Naive thymus-derived CD4-positive, alpha-beta T cell (primary cell): ENCODE measurements at regions of chr3 and their contacts with region 1.

Region 1: GRCh38 chr3:188320757-188321156 is 166.8 kb downstream of the LPP start:
- DNase-seq: no peak
- ATAC-seq: no peak
- H3K4me3 ChIP-seq: no peak overlapping the region
- H3K4me3 Mint-ChIP-seq: peak overlapping the region in 1 of 10 donors; percentile 37
- H3K27ac ChIP-seq: no peak overlapping the region
- H3K27ac Mint-ChIP-seq: peak overlapping the region in 2 of 9 donors; percentile 11 to 59
- H3K4me1 ChIP-seq: peaks cover 19 to 26% of the 10 kb centered on the region in 2 donors
- H3K4me1 Mint-ChIP-seq: peaks cover 34 to 67% (median 55%) of the 10 kb centered on the region in 7 donors
- H3K27me3 ChIP-seq: no peaks in the 10 kb centered on the region
- H3K27me3 Mint-ChIP-seq: peaks cover 0 to 6% (median 0%) of the 10 kb centered on the region in 5 donors

Region 2: GRCh38 chr3:188309437-188310269 is 11.1 kb before region 1 on chr3:
- CTCF ChIA-PET with region 1: no interaction called
- POLR2A ChIA-PET with region 1: no interaction called
- intact Hi-C with region 1: loop called in 1 of 2 experiments (anchors 1 kb)
- DNase-seq: peak in 1 of 9 donors; percentile 42
- ATAC-seq: no peak
- H3K4me3 ChIP-seq: no peak overlapping the region
- H3K4me3 Mint-ChIP-seq: peak overlapping the region in 2 of 10 donors; percentile 3 to 75
- H3K27ac ChIP-seq: no peak overlapping the region
- H3K27ac Mint-ChIP-seq: peak overlapping the region in 4 of 9 donors; percentile 10 to 77 (median 44)
- H3K4me1 ChIP-seq: no peaks in the 10 kb centered on the region
- H3K4me1 Mint-ChIP-seq: peaks cover 9 to 25% (median 14%) of the 10 kb centered on the region in 7 donors
- H3K27me3 ChIP-seq: no peaks in the 10 kb centered on the region
- H3K27me3 Mint-ChIP-seq: peaks cover 0 to 10% (median 0%) of the 10 kb centered on the region in 5 donors

Region 3: GRCh38 chr3:188339410-188340295 is 18.9 kb after region 1 on chr3:
- CTCF ChIA-PET with region 1: interaction called, 3 read pairs
- POLR2A ChIA-PET with region 1: no interaction called
- intact Hi-C with region 1: loop called in 1 of 2 experiments (anchors 1 kb)
- DNase-seq: peak in 1 of 9 donors; percentile 41
- ATAC-seq: peak; percentile 89
- H3K4me3 ChIP-seq: peak overlapping the region; percentile 5
- H3K4me3 Mint-ChIP-seq: peak overlapping the region in 4 of 10 donors; percentile 2 to 71 (median 4)
- H3K27ac ChIP-seq: no peak overlapping the region
- H3K27ac Mint-ChIP-seq: peak overlapping the region in 3 of 9 donors; percentile 6 to 80 (median 80)
- H3K4me1 ChIP-seq: peaks cover 0 to 17% of the 10 kb centered on the region in 2 donors
- H3K4me1 Mint-ChIP-seq: peaks cover 12 to 33% (median 19%) of the 10 kb centered on the region in 7 donors
- H3K27me3 ChIP-seq: no peaks in the 10 kb centered on the region
- H3K27me3 Mint-ChIP-seq: peaks cover 0 to 12% (median 0%) of the 10 kb centered on the region in 5 donors

Region 4: GRCh38 chr3:188358787-188359493 is 38.2 kb after region 1 on chr3:
- CTCF ChIA-PET with region 1: no interaction called
- POLR2A ChIA-PET with region 1: no interaction called
- intact Hi-C with region 1: loop called in 1 of 2 experiments (anchors 2 kb)
- DNase-seq: peak in 7 of 9 donors; percentile 11 to 56 (median 44)
- ATAC-seq: peak; percentile 85
- H3K4me3 ChIP-seq: peak overlapping the region; percentile 8
- H3K4me3 Mint-ChIP-seq: peak overlapping the region; percentile 53 to 82 (median 69)
- H3K27ac ChIP-seq: peak overlapping the region; percentile 45
- H3K27ac Mint-ChIP-seq: peak overlapping the region; percentile 31 to 95 (median 82)
- H3K4me1 ChIP-seq: peaks cover 31 to 32% of the 10 kb centered on the region in 2 donors
- H3K4me1 Mint-ChIP-seq: peaks cover 31 to 58% (median 47%) of the 10 kb centered on the region in 7 donors
- H3K27me3 ChIP-seq: no peaks in the 10 kb centered on the region
- H3K27me3 Mint-ChIP-seq: peaks cover 0 to 4% (median 0%) of the 10 kb centered on the region in 5 donors

Region 5: GRCh38 chr3:188400494-188401243 is 79.9 kb after region 1 on chr3:
- CTCF ChIA-PET with region 1: no interaction called
- POLR2A ChIA-PET with region 1: no interaction called
- intact Hi-C with region 1: loop called in 1 of 2 experiments (anchors 5 kb)
- DNase-seq: no peak
- ATAC-seq: peak; percentile 75
- H3K4me3 ChIP-seq: no peak overlapping the region
- H3K4me3 Mint-ChIP-seq: peak overlapping the region in 1 of 10 donors; percentile 42
- H3K27ac ChIP-seq: no peak overlapping the region
- H3K27ac Mint-ChIP-seq: peak overlapping the region in 2 of 9 donors; percentile 58 to 69
- H3K4me1 ChIP-seq: peaks cover 0 to 4% of the 10 kb centered on the region in 2 donors
- H3K4me1 Mint-ChIP-seq: peaks cover 28 to 63% (median 49%) of the 10 kb centered on the region in 7 donors
- H3K27me3 ChIP-seq: no peaks in the 10 kb centered on the region
- H3K27me3 Mint-ChIP-seq: no peaks in the 10 kb centered on the region

Region 6: DNA sequence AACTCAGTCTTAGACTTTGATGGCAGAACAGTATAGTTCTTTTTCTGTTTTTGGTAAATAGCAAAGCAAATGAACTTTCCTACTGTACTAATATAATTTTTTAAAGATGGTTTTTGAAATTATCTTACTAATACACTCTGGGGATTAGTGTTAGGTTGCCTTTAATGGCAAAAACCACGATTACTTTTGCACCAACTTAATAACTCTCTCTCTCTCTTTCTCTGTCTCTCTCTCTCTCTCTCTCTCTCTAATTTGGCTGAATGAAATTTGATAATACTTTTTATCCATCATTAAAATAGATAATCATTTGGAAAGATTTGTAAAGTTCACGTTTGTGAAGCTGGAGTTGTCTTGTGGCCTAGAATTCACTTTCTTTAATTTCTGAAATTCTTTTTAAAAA is 91.0 kb after region 1 on chr3:
- CTCF ChIA-PET with region 1: no interaction called
- POLR2A ChIA-PET with region 1: no interaction called
- intact Hi-C with region 1: no loop called
- DNase-seq: no peak
- ATAC-seq: no peak
- H3K4me3 ChIP-seq: no peak overlapping the region
- H3K4me3 Mint-ChIP-seq: no peak overlapping the region
- H3K27ac ChIP-seq: no peak overlapping the region
- H3K27ac Mint-ChIP-seq: no peak overlapping the region
- H3K4me1 ChIP-seq: no peaks in the 10 kb centered on the region
- H3K4me1 Mint-ChIP-seq: peaks cover 0 to 4% (median under 1%) of the 10 kb centered on the region in 7 donors
- H3K27me3 ChIP-seq: no peaks in the 10 kb centered on the region
- H3K27me3 Mint-ChIP-seq: no peaks in the 10 kb centered on the region

Region 7: DNA sequence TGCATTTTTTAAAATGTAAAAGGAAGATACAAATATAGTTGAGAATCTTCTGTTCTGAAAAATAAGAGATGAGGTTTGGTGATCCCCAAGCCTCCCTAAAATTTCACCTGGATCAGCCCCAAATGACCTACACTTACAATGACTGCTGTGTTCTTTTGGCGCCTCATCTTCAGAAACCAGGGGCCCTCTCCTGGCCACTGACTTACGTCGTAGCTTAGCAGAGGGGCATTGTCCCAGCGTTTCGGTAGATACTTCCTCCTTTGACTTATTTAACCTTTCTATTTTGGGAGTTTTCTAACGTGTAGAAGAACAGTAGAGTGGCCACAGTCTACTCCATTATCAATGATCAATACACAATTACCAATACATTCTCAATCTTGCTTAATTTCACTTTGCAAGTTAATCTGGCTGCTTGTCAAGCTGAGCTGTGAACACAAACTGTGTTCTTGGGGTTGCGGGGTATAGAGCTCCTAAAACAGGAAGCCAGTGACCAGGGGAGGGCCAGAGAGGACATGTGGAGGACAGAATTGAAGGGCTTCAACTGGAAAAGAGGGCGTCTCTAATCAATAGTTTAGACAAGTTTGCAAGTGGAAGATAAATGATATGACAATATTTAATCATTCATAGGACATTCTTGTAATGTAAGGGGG is 252.7 kb after region 1 on chr3:
- CTCF ChIA-PET with region 1: no interaction called
- POLR2A ChIA-PET with region 1: no interaction called
- intact Hi-C with region 1: no loop called
- DNase-seq: no peak
- ATAC-seq: no peak
- H3K4me3 ChIP-seq: no peak overlapping the region
- H3K4me3 Mint-ChIP-seq: no peak overlapping the region
- H3K27ac ChIP-seq: no peak overlapping the region
- H3K27ac Mint-ChIP-seq: no peak overlapping the region
- H3K4me1 ChIP-seq: no peaks in the 10 kb centered on the region
- H3K4me1 Mint-ChIP-seq: peaks cover 0 to 13% (median 0%) of the 10 kb centered on the region in 7 donors
- H3K27me3 ChIP-seq: no peaks in the 10 kb centered on the region
- H3K27me3 Mint-ChIP-seq: no peaks in the 10 kb centered on the region